ENCODE measurements at regions of chrX and their contacts with region 1.

Region 1: DNA sequence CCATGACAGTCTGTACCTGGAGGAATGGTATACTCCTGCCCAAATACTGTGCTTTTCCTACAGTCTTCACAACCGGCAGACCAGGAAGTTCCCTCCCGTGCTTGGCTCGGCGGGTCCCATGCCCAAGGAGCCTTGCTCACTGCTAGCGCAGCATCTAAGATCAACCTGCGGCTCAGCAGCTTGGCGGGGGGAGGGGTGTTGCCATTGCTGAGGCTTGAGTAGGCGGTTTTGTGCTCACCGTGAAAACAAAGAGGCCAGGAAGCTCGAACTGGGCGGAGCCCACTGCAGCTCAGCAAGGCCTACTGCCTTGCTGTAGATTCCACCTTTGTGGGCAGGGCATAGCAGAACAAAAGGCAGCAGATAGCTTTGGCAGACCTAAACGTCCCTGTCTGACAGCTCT is 152.7 kb downstream of the TEX11 start:
- DNase-seq: peak; percentile 38
- H3K4me3 Mint-ChIP-seq: no peak overlapping the region
- H3K27ac Mint-ChIP-seq: peak overlapping the region; percentile 38
- H3K4me1 Mint-ChIP-seq: peaks cover 16% of the 10 kb centered on the region
- H3K27me3 Mint-ChIP-seq: no peaks in the 10 kb centered on the region

Region 2: GRCh38 chrX:70621743-70622142 is 134.1 kb before region 1 on chrX:
- intact Hi-C with region 1: no loop called
- DNase-seq: no peak
- H3K4me3 Mint-ChIP-seq: no peak overlapping the region
- H3K27ac Mint-ChIP-seq: no peak overlapping the region
- H3K4me1 Mint-ChIP-seq: peaks cover 6% of the 10 kb centered on the region
- H3K27me3 Mint-ChIP-seq: peaks cover 3% of the 10 kb centered on the region

Region 3: DNA sequence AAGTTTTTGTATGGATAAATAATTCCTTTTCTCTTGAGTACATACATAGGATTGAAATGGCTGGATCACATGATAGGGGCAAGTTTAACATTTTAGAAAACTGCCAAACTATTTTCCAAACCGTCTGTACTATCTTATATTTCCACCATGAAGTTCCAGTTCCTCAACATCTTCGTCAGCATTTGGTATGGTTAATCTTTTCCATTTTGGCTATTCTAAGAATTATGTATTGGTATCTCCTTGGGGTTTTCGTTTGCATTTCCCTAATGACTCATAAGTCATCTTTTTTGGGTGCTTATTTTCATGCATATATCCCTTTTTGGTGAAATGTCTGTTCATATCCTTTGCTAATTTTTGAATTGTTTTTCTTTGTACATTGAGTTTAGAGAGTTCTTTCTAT is 83.5 kb before region 1 on chrX:
- intact Hi-C with region 1: loop called (anchors 10 kb)
- DNase-seq: no peak
- H3K4me3 Mint-ChIP-seq: no peak overlapping the region
- H3K27ac Mint-ChIP-seq: peak overlapping the region; percentile 86
- H3K4me1 Mint-ChIP-seq: peaks cover 23% of the 10 kb centered on the region
- H3K27me3 Mint-ChIP-seq: no peaks in the 10 kb centered on the region

Measured in activated T-helper 2 cell treated with anti-CD3 and anti-CD28 coated beads, Interferon-gamma antibody, Interleukin-2, Interleukin-4, amounts not matched to agents 10 μg/mL and 5 μg/mL and 100 μg/mL, durations not matched to agents 14 hours and 24 hours and 36 hours (primary cell).